ENCODE measurements at regions of chr11 and their contacts with region 1.

Region 1: GRCh38 chr11:60251485-60252212 is 8.7 kb upstream of the MS4A4E start:
- H3K4me3 ChIP-seq: no peak overlapping the region
- H3K27ac ChIP-seq: no peak overlapping the region
- H3K4me1 ChIP-seq: no peaks in the 10 kb centered on the region
- CTCF ChIP-seq: peak; percentile 19; the same call in 1 of the 2 replicates

Region 2: GRCh38 chr11:59822989-59823566 is 428.6 kb before region 1 on chr11:
- CTCF ChIA-PET with region 1: interaction called, 10 read pairs
- POLR2A ChIA-PET with region 1: no interaction called
- H3K4me3 ChIP-seq: no peak overlapping the region
- H3K27ac ChIP-seq: no peak overlapping the region
- H3K4me1 ChIP-seq: no peaks in the 10 kb centered on the region
- CTCF ChIP-seq: peak; percentile 20; the same call in 1 of the 2 replicates

Region 3: DNA sequence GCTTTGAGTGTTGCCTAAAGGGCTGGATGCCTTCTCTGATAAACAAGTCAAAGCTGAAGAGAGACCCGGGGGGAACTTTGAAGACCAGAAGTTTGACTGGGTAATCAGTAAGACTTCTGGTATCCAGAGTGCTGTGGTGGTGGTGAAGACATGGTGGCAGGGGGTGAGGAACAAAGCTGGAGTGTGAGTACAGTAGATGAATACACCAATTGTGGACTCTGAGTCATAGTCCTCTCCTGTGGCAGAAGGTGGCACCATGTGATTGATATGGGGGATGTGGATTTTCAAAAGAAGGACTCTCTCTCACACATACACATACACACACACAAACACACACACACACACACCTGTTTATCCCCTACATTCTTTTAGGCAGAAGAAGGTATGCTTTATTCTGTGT is 81.1 kb before region 1 on chr11:
- CTCF ChIA-PET with region 1: interaction called, 13 read pairs
- POLR2A ChIA-PET with region 1: no interaction called
- H3K4me3 ChIP-seq: no peak overlapping the region
- H3K27ac ChIP-seq: no peak overlapping the region
- H3K4me1 ChIP-seq: no peaks in the 10 kb centered on the region
- CTCF ChIP-seq: no peak

Region 4: GRCh38 chr11:60265373-60266214 is 13.9 kb after region 1 on chr11:
- CTCF ChIA-PET with region 1: interaction called, 13 read pairs
- POLR2A ChIA-PET with region 1: no interaction called
- H3K4me3 ChIP-seq: no peak overlapping the region
- H3K27ac ChIP-seq: no peak overlapping the region
- H3K4me1 ChIP-seq: no peaks in the 10 kb centered on the region
- CTCF ChIP-seq: no peak